ENCODE measurements at regions of chr1 and their contacts with region 1.

Region 1: GRCh38 chr1:162357681-162358266 is 18.9 kb downstream of the SPATA46 start:
- DNase-seq: peak in 1 of 2 experiments; percentile 61
- H3K4me3 ChIP-seq: no peak overlapping the region
- H3K4me3 Mint-ChIP-seq: no peak overlapping the region
- H3K27ac Mint-ChIP-seq: no peak overlapping the region
- H3K4me1 ChIP-seq: no peaks in the 10 kb centered on the region
- H3K4me1 Mint-ChIP-seq: peaks cover 9% of the 10 kb centered on the region
- H3K27me3 ChIP-seq: no peaks in the 10 kb centered on the region
- H3K27me3 Mint-ChIP-seq: no peaks in the 10 kb centered on the region
- CTCF ChIP-seq: peak; percentile 65 to 73

Region 2: DNA sequence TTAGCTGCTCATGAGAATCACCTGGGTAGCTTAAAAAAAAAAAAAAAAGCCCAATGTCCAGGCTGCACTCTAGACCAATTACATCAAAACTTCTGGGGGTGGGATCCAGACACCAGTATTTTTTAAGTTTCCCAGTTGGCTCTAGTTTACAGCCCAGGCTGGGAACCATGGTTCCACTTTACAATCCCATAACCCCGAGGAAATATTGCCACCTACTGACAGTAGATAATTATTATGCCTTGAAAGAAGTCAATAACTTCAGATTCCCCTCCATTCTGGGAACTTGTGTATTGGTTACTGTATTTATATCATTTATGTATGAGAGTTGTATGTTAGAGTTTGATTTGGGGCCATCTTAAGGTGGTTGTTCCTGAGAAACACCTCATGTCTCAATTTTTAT is 81.3 kb before region 1 on chr1:
- CTCF ChIA-PET with region 1: no interaction called
- POLR2A ChIA-PET with region 1: no interaction called
- intact Hi-C with region 1: no loop called
- DNase-seq: peak in 1 of 2 experiments; percentile 48
- H3K4me3 ChIP-seq: no peak overlapping the region
- H3K4me3 Mint-ChIP-seq: no peak overlapping the region
- H3K27ac Mint-ChIP-seq: no peak overlapping the region
- H3K4me1 ChIP-seq: no peaks in the 10 kb centered on the region
- H3K4me1 Mint-ChIP-seq: no peaks in the 10 kb centered on the region
- H3K27me3 ChIP-seq: no peaks in the 10 kb centered on the region
- H3K27me3 Mint-ChIP-seq: no peaks in the 10 kb centered on the region
- CTCF ChIP-seq: peak; percentile 50 to 51

Region 3: GRCh38 chr1:162497723-162498500 is 140.1 kb after region 1 on chr1 and contains the start of gene UHMK1:
- CTCF ChIA-PET with region 1: no interaction called
- POLR2A ChIA-PET with region 1: no interaction called
- intact Hi-C with region 1: loop called (anchors 5 kb)
- DNase-seq: peak; percentile 85 to 90
- H3K4me3 ChIP-seq: peak within 1 kb of the TSS; percentile 80
- H3K4me3 Mint-ChIP-seq: peak within 1 kb of the TSS; percentile 93
- H3K27ac Mint-ChIP-seq: peak within 1 kb of the TSS; percentile 94
- H3K4me1 ChIP-seq: 0 out of 2 replicates have a peak, but pooled peaks cover 3% of the 10 kb centered on the region
- H3K4me1 Mint-ChIP-seq: no peaks in the 10 kb centered on the region
- H3K27me3 ChIP-seq: no peaks in the 10 kb centered on the region
- H3K27me3 Mint-ChIP-seq: no peaks in the 10 kb centered on the region
- CTCF ChIP-seq: no peak
- total RNA-seq, gene UHMK1: 23.4 and 24.9 TPM in 2 replicates